Breast epithelium (tissue), 4 donors: ENCODE measurements at regions of chr4 and their contacts with region 1.

Region 1: DNA sequence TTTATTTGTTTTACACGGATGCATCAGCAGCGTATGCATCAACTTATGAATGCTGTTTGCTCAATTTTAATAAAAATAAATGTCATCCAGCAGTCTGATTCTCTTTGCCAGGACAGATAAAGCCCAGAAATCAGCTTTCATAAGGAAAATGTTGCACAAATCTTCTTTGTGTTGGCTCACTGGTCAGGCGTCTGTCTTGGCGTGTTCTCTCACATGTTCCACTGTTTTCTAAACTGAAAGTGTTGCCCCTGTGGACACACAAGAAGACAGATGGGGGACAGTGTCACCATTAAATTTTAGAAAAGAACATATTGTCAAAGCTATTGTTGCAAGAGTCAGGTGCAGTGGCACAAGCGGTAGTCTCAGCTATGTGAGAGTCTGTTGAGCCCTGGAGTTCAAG is 316.2 kb downstream of the CENPC start:
- DNase-seq: no peak
- H3K4me3 ChIP-seq: no peak overlapping the region
- H3K27ac ChIP-seq: no peak overlapping the region
- H3K4me1 ChIP-seq: no peaks in the 10 kb centered on the region
- H3K27me3 ChIP-seq: no peaks in the 10 kb centered on the region
- CTCF ChIP-seq: no peak
- POLR2A ChIP-seq: no peak

Region 2: GRCh38 chr4:66451741-66452140 is 777.4 kb before region 1 on chr4:
- intact Hi-C with region 1: loop called (anchors 5 kb)
- DNase-seq: no peak
- H3K4me3 ChIP-seq: no peak overlapping the region
- H3K27ac ChIP-seq: no peak overlapping the region
- H3K4me1 ChIP-seq: no peaks in the 10 kb centered on the region
- H3K27me3 ChIP-seq: no peaks in the 10 kb centered on the region
- CTCF ChIP-seq: no peak
- POLR2A ChIP-seq: no peak

Region 3: DNA sequence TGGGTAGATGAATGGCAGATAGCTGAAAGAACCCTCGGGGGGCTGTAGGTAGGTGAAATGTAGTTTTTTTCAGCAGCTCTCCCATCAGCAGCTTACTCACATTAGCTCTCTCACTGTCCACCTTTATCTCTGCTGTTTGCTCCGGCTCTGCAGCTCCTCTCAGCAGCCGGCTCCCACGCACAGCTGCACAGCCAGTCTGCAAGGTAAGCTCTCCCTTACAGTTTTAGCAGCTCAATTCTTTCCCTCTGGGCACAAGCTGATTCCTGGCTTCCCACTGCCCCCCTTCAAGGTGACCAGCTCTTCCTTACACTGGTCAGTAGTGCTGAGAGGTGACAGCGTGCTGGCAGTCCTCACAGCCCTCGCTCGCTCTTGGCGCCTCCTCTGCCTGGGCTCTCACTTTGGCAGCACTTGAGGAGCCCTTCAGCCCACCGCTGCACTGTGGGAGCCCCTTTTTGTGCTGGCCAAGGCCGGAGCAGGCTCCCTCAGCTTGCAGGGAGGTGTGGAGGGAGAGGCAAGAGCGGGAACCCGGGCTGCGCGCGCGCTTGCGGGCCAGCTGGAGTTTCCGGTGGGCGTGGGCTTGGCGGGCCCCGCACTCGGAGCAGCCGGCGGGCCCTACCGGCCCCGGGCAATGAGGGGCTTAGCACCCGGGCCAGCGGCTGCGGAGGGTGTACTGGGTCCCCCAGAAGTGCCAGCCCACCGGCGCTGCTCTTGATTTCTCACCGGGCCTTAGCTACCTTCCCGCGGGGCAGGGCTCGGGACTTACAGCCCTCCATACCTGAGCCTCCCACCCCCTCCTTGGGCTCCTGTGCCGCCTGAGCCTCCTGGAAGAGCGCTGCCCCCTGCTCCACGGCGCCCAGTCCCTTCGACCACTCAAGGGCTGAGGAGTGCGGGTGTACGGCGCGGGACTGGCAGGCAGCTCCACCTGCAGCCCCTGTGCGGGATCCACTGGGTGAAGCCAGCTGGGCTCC is 77.5 kb before region 1 on chr4:
- intact Hi-C with region 1: no loop called
- DNase-seq: no peak
- H3K4me3 ChIP-seq: no peak overlapping the region
- H3K27ac ChIP-seq: no peak overlapping the region
- H3K4me1 ChIP-seq: no peaks in the 10 kb centered on the region
- H3K27me3 ChIP-seq: no peaks in the 10 kb centered on the region
- CTCF ChIP-seq: no peak
- POLR2A ChIP-seq: no peak

Region 4: GRCh38 chr4:67288964-67289363 is 59.8 kb after region 1 on chr4:
- intact Hi-C with region 1: no loop called
- DNase-seq: no peak
- H3K4me3 ChIP-seq: no peak overlapping the region
- H3K27ac ChIP-seq: no peak overlapping the region
- H3K4me1 ChIP-seq: no peaks in the 10 kb centered on the region
- H3K27me3 ChIP-seq: no peaks in the 10 kb centered on the region
- CTCF ChIP-seq: no peak
- POLR2A ChIP-seq: no peak